B cell (primary cell): ENCODE measurements at regions of chr3 and their contacts with region 1.

Region 1: DNA sequence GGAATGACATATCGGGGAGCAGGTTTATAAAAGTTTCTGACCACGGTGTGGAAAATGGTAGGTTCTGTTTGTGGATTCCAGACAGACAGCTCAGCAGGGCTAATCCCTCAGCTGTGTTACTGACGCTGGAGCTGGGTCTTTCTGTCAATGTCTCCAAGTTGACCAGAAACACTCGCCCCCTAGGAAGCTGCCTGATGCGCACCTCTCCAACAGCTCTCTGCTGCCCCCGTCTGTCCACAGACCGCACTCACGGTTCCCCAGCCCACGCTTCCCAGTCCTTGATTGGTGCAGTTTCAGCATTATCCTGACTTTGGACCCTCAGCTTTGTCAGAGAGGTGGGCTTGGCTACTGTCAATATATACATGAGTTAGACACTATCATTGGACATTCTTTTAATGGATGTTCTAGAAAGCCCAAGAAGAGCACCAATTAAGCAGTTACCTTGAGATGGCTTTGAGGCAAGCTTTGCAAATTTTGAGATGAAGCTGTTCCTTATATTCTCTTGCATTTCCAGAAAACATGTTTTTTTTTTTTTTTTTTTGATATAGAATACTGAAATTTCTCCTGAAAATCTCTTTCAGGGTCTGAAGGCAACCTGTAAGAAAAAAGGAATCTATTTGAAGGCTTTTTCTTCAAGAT is 98.9 kb upstream of the TBC1D5 start:
- DNase-seq: peak; percentile 77
- ATAC-seq: peak; percentile 83
- H3K4me3 ChIP-seq: no peak overlapping the region
- H3K4me3 Mint-ChIP-seq: no peak overlapping the region
- H3K27ac ChIP-seq: no peak overlapping the region
- H3K27ac Mint-ChIP-seq: no peak overlapping the region
- H3K4me1 ChIP-seq: peaks cover 0 to 3% of the 10 kb centered on the region in 2 donors
- H3K4me1 Mint-ChIP-seq: no peaks in the 10 kb centered on the region
- H3K27me3 ChIP-seq: no peaks in the 10 kb centered on the region
- H3K27me3 Mint-ChIP-seq: peaks cover 7% of the 10 kb centered on the region
- CTCF ChIP-seq: peak; percentile 97

Region 2: GRCh38 chr3:16600780-16601539 is 1240.3 kb before region 1 on chr3:
- CTCF ChIA-PET with region 1: interaction called, 34 read pairs
- POLR2A ChIA-PET with region 1: no interaction called
- intact Hi-C with region 1: loop called (anchors 1 kb)
- DNase-seq: peak; percentile 85
- ATAC-seq: peak; percentile 51
- H3K4me3 ChIP-seq: no peak overlapping the region
- H3K4me3 Mint-ChIP-seq: no peak overlapping the region
- H3K27ac ChIP-seq: no peak overlapping the region
- H3K27ac Mint-ChIP-seq: no peak overlapping the region
- H3K4me1 ChIP-seq: peaks cover 3% of the 10 kb centered on the region in 2 donors
- H3K4me1 Mint-ChIP-seq: peaks cover 2% of the 10 kb centered on the region
- H3K27me3 ChIP-seq: peaks cover 0 to 2% (median 0%) of the 10 kb centered on the region in 4 experiments
- H3K27me3 Mint-ChIP-seq: peaks cover 5% of the 10 kb centered on the region
- CTCF ChIP-seq: peak; percentile 93

Region 3: DNA sequence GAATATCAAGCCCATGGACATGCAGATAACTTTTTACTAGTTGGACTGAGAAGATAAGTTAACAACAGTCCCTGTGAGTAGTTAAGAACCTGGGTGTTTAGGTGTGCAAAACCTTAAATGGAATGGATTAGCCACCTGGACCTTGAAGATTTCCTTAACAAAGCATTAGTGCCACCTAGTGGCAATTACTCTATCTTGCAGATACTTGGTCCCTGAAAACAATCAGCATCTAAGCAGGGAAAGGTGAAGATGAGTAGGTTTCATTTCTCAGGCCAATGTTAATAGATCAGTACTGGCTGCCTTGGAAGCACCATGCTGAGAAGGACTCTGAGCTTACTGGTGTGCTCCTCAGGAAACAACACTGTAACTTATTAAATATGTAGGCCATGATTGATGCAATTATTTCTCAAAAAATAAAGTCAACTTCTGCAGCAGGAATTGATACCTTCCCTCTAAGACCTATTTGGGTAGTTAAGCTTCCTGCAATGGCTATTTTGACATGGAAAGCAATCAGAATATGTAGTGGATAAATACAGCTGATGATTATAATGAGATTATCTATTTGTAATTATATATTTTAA is 428.3 kb before region 1 on chr3:
- CTCF ChIA-PET with region 1: interaction called, 19 read pairs
- POLR2A ChIA-PET with region 1: no interaction called
- intact Hi-C with region 1: no loop called
- DNase-seq: peak; percentile 67
- ATAC-seq: no peak
- H3K4me3 ChIP-seq: no peak overlapping the region
- H3K4me3 Mint-ChIP-seq: no peak overlapping the region
- H3K27ac ChIP-seq: no peak overlapping the region
- H3K27ac Mint-ChIP-seq: no peak overlapping the region
- H3K4me1 ChIP-seq: no peaks in the 10 kb centered on the region
- H3K4me1 Mint-ChIP-seq: no peaks in the 10 kb centered on the region
- H3K27me3 ChIP-seq: no peaks in the 10 kb centered on the region
- H3K27me3 Mint-ChIP-seq: no peaks in the 10 kb centered on the region
- CTCF ChIP-seq: peak; percentile 83

Region 4: DNA sequence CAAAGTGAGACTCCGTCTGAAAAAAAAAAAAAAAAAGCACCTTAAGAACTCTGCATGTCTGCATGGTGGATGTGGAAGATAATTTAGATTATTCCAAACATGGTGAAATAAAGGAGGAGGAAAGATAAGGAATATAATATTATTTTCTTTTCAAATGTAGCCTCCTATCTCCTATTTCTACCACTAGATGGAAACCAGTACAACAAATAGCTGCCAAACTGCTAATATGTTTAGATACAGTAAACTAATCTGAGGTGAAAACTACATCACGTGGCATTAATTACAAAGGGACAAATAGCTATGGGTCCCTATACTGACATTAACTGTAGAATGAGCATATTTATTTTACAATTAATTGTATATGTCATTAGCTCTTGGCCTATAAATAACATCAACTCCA is 296.7 kb before region 1 on chr3:
- CTCF ChIA-PET with region 1: interaction called, 6 read pairs
- POLR2A ChIA-PET with region 1: no interaction called
- intact Hi-C with region 1: loop called (anchors 10 kb)
- DNase-seq: no peak
- ATAC-seq: no peak
- H3K4me3 ChIP-seq: no peak overlapping the region
- H3K4me3 Mint-ChIP-seq: no peak overlapping the region
- H3K27ac ChIP-seq: no peak overlapping the region
- H3K27ac Mint-ChIP-seq: no peak overlapping the region
- H3K4me1 ChIP-seq: no peaks in the 10 kb centered on the region
- H3K4me1 Mint-ChIP-seq: no peaks in the 10 kb centered on the region
- H3K27me3 ChIP-seq: no peaks in the 10 kb centered on the region
- H3K27me3 Mint-ChIP-seq: no peaks in the 10 kb centered on the region
- CTCF ChIP-seq: no peak

Region 5: GRCh38 chr3:17639765-17640164 is 201.5 kb before region 1 on chr3:
- CTCF ChIA-PET with region 1: interaction called, 177 read pairs
- POLR2A ChIA-PET with region 1: no interaction called
- intact Hi-C with region 1: no loop called
- DNase-seq: no peak
- ATAC-seq: no peak
- H3K4me3 ChIP-seq: no peak overlapping the region
- H3K4me3 Mint-ChIP-seq: no peak overlapping the region
- H3K27ac ChIP-seq: no peak overlapping the region
- H3K27ac Mint-ChIP-seq: no peak overlapping the region
- H3K4me1 ChIP-seq: no peaks in the 10 kb centered on the region
- H3K4me1 Mint-ChIP-seq: peaks cover 23% of the 10 kb centered on the region
- H3K27me3 ChIP-seq: no peaks in the 10 kb centered on the region
- H3K27me3 Mint-ChIP-seq: no peaks in the 10 kb centered on the region
- CTCF ChIP-seq: no peak

Region 6: GRCh38 chr3:17747174-17747889 is 94.0 kb before region 1 on chr3:
- CTCF ChIA-PET with region 1: interaction called, 20 read pairs
- POLR2A ChIA-PET with region 1: no interaction called
- intact Hi-C with region 1: no loop called
- DNase-seq: peak; percentile 63
- ATAC-seq: peak; percentile 19
- H3K4me3 ChIP-seq: peak overlapping the region in 1 of 5 experiments; percentile 30
- H3K4me3 Mint-ChIP-seq: peak overlapping the region; percentile 82
- H3K27ac ChIP-seq: peak overlapping the region; percentile 56 to 81
- H3K27ac Mint-ChIP-seq: peak overlapping the region; percentile 94
- H3K4me1 ChIP-seq: peaks cover 43 to 45% of the 10 kb centered on the region in 2 donors
- H3K4me1 Mint-ChIP-seq: peaks cover 43% of the 10 kb centered on the region
- H3K27me3 ChIP-seq: no peaks in the 10 kb centered on the region
- H3K27me3 Mint-ChIP-seq: no peaks in the 10 kb centered on the region
- CTCF ChIP-seq: no peak

Region 7: DNA sequence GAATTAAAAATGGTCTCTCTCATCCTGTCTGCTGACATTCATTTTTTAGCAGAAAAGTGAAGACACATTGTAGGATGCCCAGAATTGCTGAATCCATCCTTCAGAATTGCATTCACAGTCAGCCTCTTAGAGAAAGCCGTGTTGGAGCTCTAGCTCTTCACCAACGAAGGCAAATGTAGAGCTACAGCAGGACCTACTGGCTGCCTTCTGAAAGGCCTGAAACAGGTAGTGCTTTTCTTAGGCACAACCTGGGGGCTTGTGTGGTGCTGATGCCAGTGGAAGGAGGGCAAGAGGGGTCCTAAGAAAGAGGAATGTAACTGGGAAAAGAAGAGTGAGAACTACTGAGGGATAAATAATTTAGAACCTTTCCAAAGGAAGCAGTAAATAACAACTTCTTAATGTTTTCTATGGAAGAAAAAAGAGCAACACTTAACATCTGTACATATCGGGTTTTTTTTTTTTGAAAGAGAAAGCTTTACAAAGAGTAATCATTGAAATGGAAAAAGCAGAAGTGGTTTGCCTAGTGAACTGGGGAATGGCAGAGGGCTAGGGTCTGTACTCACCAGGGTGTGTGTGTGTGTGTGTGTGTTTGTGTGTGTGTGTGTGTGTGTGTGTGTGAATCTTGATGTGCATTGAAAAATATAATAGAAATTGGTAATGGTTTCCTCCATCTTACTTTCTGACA is 286.0 kb after region 1 on chr3:
- CTCF ChIA-PET with region 1: interaction called, 18 read pairs
- POLR2A ChIA-PET with region 1: no interaction called
- intact Hi-C with region 1: no loop called
- DNase-seq: peak; percentile 87
- ATAC-seq: peak; percentile 96
- H3K4me3 ChIP-seq: peak overlapping the region in 3 of 5 experiments; percentile 15 to 30 (median 25)
- H3K4me3 Mint-ChIP-seq: peak overlapping the region; percentile 35
- H3K27ac ChIP-seq: peak overlapping the region; percentile 57 to 72
- H3K27ac Mint-ChIP-seq: peak overlapping the region; percentile 91
- H3K4me1 ChIP-seq: peaks cover 30 to 32% of the 10 kb centered on the region in 2 donors
- H3K4me1 Mint-ChIP-seq: peaks cover 31% of the 10 kb centered on the region
- H3K27me3 ChIP-seq: no peaks in the 10 kb centered on the region
- H3K27me3 Mint-ChIP-seq: no peaks in the 10 kb centered on the region
- CTCF ChIP-seq: peak; percentile 20